Aorta (tissue), 5 donors: ENCODE measurements at regions of chr7 and their contacts with region 1.

Region 1: GRCh38 chr7:52586704-52587103 is 448.7 kb upstream of the POM121L12 start:
- DNase-seq: no peak
- ATAC-seq: no peak
- H3K4me3 ChIP-seq: no peak overlapping the region
- H3K27ac ChIP-seq: no peak overlapping the region
- H3K4me1 ChIP-seq: no peaks in the 10 kb centered on the region
- H3K27me3 ChIP-seq: no peaks in the 10 kb centered on the region

Region 2: DNA sequence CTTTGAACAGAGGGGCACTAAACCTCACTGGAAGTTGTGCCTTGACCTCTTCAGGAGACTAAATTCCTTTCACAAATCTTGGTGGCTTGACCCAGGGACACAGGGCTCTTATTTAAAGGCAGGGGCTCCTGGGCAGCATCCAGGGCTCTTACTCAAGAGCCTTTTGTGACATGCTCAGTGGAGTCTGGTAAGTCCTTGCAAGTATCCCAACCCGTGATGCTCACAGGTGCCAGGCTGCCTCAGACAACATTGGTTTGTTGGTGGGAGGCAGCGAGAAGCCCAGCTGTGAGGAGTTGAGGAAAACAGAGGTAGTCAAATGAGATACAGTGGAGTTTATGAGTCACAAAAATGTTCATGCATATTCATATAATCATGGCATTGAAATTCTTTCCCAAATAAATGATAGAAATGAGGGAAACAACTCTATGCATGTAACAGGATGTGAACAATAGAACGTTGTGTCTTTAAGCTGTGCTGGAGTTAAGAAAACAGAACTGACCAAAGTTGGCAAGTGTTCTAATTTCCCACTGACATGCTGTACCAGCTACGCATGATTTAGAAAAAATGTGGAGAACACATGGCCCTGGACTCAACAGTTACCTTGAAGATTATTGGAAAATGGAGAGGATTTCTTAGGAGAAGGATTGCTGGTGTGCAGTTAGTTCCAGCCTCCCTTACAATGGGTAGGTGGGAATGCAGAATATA is 615.6 kb before region 1 on chr7:
- intact Hi-C with region 1: no loop called
- DNase-seq: no peak
- ATAC-seq: no peak
- H3K4me3 ChIP-seq: no peak overlapping the region
- H3K27ac ChIP-seq: no peak overlapping the region
- H3K4me1 ChIP-seq: no peaks in the 10 kb centered on the region
- H3K27me3 ChIP-seq: no peaks in the 10 kb centered on the region

Region 3: DNA sequence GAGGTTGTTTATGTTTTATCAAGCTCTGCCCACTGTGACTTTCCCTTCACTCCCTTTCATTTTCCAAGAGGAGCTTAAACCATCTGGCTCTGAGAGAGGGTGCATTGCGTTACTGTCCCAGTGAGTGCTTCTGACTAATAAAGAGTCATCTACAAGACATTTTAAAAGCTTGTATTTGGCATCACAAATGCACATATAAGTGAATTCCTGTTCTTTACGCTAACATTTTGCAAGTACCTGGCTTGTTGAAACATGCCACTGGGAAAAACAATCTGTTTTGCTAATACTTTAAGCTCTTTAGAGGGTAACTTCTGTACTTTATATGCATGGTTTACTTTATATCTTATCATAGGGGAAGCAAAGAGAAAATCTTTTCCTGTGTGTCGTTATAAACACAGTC is 85.9 kb before region 1 on chr7:
- intact Hi-C with region 1: no loop called
- DNase-seq: no peak
- ATAC-seq: no peak
- H3K4me3 ChIP-seq: no peak overlapping the region
- H3K27ac ChIP-seq: no peak overlapping the region
- H3K4me1 ChIP-seq: no peaks in the 10 kb centered on the region
- H3K27me3 ChIP-seq: no peaks in the 10 kb centered on the region

Region 4: GRCh38 chr7:52615021-52615695 is 28.5 kb after region 1 on chr7:
- intact Hi-C with region 1: loop called in 1 of 2 experiments (anchors 2 kb)
- DNase-seq: no peak
- ATAC-seq: no peak
- H3K4me3 ChIP-seq: no peak overlapping the region
- H3K27ac ChIP-seq: no peak overlapping the region
- H3K4me1 ChIP-seq: no peaks in the 10 kb centered on the region
- H3K27me3 ChIP-seq: no peaks in the 10 kb centered on the region